Left lung (tissue), 14 donors: ENCODE measurements at regions of chr3 and their contacts with region 1.

Region 1: DNA sequence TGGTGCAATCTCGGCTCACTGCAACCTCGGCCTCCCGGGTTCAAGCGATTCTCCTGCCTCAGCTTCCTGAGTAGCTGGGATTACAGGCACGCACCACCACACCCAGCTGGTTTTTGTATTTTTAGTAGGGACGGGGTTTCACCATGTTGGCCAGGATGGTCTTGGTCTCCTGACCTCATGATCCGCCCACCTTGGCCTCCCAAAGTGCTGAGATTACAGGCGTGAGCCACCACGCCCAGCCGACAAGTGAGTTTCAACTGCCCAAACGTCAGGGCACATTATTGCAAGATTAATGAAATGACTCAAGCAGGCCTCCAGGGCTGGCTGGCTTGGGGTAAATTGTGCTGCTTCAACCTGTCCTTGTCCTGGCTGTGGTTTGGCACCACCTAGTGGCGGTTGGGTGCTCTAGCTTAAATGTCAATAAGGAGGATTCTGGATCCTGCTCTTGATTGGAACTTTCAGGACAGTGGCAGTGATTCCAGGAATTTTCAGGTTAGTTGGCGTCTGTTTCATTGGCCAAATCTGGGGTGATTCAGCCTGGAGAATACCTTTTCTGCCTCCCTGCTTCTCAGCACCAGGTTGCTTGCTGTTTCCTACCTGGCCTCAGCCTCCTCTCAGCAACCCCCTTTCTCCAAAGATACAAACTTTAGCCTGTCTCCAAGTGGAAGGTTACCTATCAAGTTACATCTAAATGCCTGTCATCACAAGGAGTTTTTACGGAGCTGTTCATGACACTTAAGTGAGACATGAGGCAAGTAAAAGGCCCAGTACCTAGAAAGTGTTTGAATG is 32.4 kb upstream of the SACM1L start:
- DNase-seq: peak; percentile 71 to 94 (median 90)
- ATAC-seq: peak; percentile 90
- H3K4me3 ChIP-seq: no peak overlapping the region
- H3K27ac ChIP-seq: peak overlapping the region; percentile 40 to 59
- H3K4me1 ChIP-seq: peaks cover 17 to 69% of the 10 kb centered on the region in 2 donors
- H3K27me3 ChIP-seq: no peaks in the 10 kb centered on the region
- CTCF ChIP-seq: peak; percentile 85 to 95

Region 2: DNA sequence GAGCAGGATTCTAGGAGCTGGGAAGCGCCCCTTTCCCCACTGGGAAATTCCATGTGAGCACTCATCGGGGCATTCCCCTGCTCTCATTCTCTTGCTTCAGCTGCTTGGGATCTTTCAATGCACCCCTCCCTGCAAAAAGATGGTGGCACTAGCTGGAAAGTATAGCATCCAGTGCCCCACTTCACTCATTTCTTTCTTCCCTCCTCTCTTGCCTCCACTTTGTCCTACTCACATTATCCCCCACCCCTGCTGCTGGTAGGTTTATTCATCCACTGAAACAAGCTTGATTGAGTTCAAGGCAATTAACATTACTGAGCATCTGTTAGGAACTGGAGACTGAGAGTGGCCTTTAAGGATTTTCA is 147.0 kb before region 1 on chr3:
- intact Hi-C with region 1: loop called in 1 of 2 experiments (anchors 2 kb)
- DNase-seq: no peak
- ATAC-seq: no peak
- H3K4me3 ChIP-seq: no peak overlapping the region
- H3K27ac ChIP-seq: no peak overlapping the region
- H3K4me1 ChIP-seq: peaks cover 0 to 15% of the 10 kb centered on the region in 2 donors
- H3K27me3 ChIP-seq: no peaks in the 10 kb centered on the region
- CTCF ChIP-seq: no peak

Region 3: GRCh38 chr3:45593708-45594609 is 62.8 kb before region 1 on chr3:
- intact Hi-C with region 1: loop called (anchors 5 to 10 kb)
- DNase-seq: peak; percentile 74 to 94 (median 77)
- ATAC-seq: peak; percentile 79
- H3K4me3 ChIP-seq: peak overlapping the region; percentile 72 to 73
- H3K27ac ChIP-seq: peak overlapping the region; percentile 89 to 90
- H3K4me1 ChIP-seq: peaks cover 31 to 68% of the 10 kb centered on the region in 2 donors
- H3K27me3 ChIP-seq: no peaks in the 10 kb centered on the region
- CTCF ChIP-seq: no peak

Region 4: DNA sequence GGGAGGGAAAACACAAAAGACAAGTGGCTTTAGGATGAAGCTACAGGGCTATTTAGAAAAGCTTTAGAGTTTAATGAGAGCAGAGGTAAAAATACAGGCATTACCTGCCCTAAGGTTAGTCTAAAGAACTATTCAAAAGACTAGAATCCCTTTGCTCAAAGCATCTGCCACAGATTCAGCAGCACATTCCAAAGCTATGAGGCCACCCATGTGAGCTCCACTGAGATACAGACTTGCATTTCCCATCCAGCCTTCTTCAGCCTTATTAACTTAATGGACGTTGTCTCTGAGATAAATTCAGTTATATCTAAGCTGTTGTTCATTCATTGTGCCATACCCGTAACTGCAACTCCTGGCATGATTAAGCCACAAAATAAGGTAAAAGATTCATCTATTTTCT is 311.9 kb after region 1 on chr3:
- intact Hi-C with region 1: no loop called
- DNase-seq: no peak
- ATAC-seq: no peak
- H3K4me3 ChIP-seq: no peak overlapping the region
- H3K27ac ChIP-seq: no peak overlapping the region
- H3K4me1 ChIP-seq: peaks cover 12 to 44% of the 10 kb centered on the region in 2 donors
- H3K27me3 ChIP-seq: no peaks in the 10 kb centered on the region
- CTCF ChIP-seq: no peak

Region 5: GRCh38 chr3:46681856-46682540 is 1025.2 kb after region 1 on chr3:
- intact Hi-C with region 1: no loop called
- DNase-seq: no peak
- ATAC-seq: no peak
- H3K4me3 ChIP-seq: no peak overlapping the region
- H3K27ac ChIP-seq: no peak overlapping the region
- H3K4me1 ChIP-seq: no peaks in the 10 kb centered on the region
- H3K27me3 ChIP-seq: no peaks in the 10 kb centered on the region
- CTCF ChIP-seq: no peak